Activated CD4-positive, alpha-beta T cell treated with anti-CD3 and anti-CD28 coated beads, Interleukin-2, amount 10 ng/mL, durations not matched to agents 24 days and 14 days (primary cell): ENCODE measurements at regions of chr1 and their contacts with region 1.

Region 1: GRCh38 chr1:66446261-66447001 is 87.5 kb upstream of the SGIP1 start:
- DNase-seq: peak; percentile 87
- H3K4me3 Mint-ChIP-seq: peak overlapping the region; percentile 77
- H3K27ac Mint-ChIP-seq: peak overlapping the region; percentile 93
- H3K4me1 Mint-ChIP-seq: peaks cover 30% of the 10 kb centered on the region
- H3K27me3 Mint-ChIP-seq: peaks cover 22% of the 10 kb centered on the region

Region 2: DNA sequence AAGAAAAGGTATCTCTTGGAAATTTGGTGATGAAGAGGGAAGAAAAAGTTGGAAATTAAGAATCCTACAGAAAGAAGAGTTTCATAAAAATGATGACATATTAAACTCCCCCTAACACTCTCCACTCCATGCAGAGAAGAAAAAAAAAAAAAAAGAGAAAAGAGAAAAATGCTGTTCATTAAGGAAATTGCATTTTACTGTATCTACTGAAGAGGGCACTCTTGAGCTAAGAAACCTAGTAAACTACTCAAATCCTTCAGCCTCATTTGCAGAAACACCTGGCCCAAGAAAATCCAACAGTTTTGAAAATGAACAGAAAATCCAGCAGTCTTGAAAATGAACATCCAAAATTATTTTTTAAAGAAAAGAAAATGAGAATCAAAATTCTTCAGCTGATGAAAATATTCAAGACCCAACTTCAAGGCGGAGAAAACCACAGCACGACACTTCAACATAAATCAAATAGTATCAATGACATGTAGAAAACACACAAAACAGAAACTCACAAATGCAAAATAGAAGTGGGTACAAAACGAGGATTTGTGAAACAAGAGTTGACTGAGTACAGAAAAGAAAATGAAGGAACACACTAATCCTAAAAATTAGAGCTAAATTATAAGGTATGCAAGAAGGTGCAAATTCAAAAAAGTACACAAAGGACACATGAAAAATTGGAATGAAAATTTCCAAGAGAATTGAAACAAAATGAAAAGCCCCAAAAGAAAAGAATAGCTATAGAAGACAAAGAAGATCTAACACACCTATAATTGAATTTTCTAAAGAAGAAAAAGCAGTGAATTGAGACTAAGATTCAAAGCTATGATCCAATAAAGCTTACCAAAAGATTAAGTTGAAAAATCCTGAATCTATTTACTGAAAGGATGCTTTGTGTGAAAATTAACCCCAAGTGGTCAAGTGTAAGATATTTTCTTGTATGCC is 1210.3 kb before region 1 on chr1:
- intact Hi-C with region 1: loop called (anchors 10 kb)
- DNase-seq: no peak
- H3K4me3 Mint-ChIP-seq: no peak overlapping the region
- H3K27ac Mint-ChIP-seq: no peak overlapping the region
- H3K4me1 Mint-ChIP-seq: peaks cover 13% of the 10 kb centered on the region
- H3K27me3 Mint-ChIP-seq: peaks cover 17% of the 10 kb centered on the region

Region 3: DNA sequence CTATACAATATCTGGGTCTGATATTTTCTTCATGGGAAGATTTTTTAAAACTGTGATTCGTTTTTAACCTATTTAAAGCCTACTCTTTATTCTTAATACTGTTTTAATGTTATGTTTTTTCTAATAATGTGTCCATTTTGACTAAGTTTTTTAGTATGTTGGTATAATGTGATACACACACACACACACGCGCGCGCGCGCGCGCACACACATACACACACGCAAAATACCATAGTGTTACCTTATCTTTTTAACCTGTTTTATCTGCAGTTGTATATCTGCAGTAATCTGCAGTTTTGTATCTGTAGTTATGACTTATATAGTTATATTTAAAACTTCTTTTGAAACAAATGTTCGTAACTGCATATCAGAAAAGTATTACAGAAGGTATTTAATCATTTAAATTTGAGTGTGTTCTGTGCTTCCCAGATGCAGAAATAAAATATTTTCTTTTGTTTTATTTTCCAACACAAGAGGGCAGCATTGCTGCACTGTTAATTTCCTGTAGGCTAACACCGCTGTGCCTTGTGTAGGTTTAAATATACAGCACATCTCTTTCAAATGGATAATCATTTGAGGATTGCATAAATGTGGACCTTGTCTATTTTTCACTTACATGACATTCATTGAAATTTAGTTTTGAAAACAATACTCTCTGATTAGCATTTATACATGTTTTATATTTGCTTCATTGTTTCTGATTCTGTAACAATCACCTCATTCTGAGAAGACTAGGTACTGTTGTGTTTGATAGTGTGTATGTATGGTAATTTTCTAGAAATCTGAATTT is 487.7 kb before region 1 on chr1:
- intact Hi-C with region 1: loop called (anchors 1 kb)
- DNase-seq: peak; percentile 82
- H3K4me3 Mint-ChIP-seq: no peak overlapping the region
- H3K27ac Mint-ChIP-seq: no peak overlapping the region
- H3K4me1 Mint-ChIP-seq: peaks cover 4% of the 10 kb centered on the region
- H3K27me3 Mint-ChIP-seq: peaks cover 3% of the 10 kb centered on the region

Region 4: GRCh38 chr1:66073388-66073787 is 373.0 kb before region 1 on chr1:
- intact Hi-C with region 1: no loop called
- DNase-seq: no peak
- H3K4me3 Mint-ChIP-seq: no peak overlapping the region
- H3K27ac Mint-ChIP-seq: no peak overlapping the region
- H3K4me1 Mint-ChIP-seq: no peaks in the 10 kb centered on the region
- H3K27me3 Mint-ChIP-seq: peaks cover 31% of the 10 kb centered on the region

Region 5: DNA sequence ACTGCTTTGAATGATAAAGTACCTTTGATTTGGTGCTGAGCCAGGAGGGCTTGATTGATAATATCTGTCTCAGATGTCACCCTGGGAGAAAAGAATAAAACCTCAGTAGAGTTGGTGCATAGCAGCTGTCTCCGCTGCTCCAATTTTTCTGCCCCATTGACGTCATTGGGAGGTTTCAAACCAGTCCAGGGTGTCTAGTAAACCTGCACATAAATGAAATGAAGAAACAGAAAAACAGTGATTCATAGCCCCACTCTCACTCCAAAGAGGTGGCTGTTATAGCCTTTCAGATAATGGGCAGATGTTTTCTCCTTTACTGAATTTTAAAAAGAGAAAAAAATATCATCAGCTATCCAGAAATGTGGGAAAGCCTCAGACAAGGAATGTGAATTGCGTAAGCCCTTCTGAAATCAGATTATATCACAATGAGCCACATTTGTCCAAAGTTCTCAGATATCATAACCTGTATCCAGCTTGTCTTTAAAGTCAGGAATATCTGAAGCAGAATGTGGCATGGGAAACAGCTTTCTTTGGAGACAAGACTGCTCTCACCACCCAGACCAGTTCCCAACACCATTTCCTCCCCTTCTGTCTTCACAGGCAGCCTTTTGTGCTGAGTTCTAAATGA is 263.8 kb before region 1 on chr1:
- intact Hi-C with region 1: loop called (anchors 5 kb)
- DNase-seq: peak; percentile 84
- H3K4me3 Mint-ChIP-seq: peak overlapping the region; percentile 52
- H3K27ac Mint-ChIP-seq: peak overlapping the region; percentile 52
- H3K4me1 Mint-ChIP-seq: peaks cover 29% of the 10 kb centered on the region
- H3K27me3 Mint-ChIP-seq: peaks cover 1% of the 10 kb centered on the region

Region 6: GRCh38 chr1:66253330-66253921 is 193.0 kb before region 1 on chr1:
- intact Hi-C with region 1: loop called (anchors 1 kb)
- DNase-seq: peak; percentile 82
- H3K4me3 Mint-ChIP-seq: no peak overlapping the region
- H3K27ac Mint-ChIP-seq: no peak overlapping the region
- H3K4me1 Mint-ChIP-seq: peaks cover 45% of the 10 kb centered on the region
- H3K27me3 Mint-ChIP-seq: no peaks in the 10 kb centered on the region

Region 7: DNA sequence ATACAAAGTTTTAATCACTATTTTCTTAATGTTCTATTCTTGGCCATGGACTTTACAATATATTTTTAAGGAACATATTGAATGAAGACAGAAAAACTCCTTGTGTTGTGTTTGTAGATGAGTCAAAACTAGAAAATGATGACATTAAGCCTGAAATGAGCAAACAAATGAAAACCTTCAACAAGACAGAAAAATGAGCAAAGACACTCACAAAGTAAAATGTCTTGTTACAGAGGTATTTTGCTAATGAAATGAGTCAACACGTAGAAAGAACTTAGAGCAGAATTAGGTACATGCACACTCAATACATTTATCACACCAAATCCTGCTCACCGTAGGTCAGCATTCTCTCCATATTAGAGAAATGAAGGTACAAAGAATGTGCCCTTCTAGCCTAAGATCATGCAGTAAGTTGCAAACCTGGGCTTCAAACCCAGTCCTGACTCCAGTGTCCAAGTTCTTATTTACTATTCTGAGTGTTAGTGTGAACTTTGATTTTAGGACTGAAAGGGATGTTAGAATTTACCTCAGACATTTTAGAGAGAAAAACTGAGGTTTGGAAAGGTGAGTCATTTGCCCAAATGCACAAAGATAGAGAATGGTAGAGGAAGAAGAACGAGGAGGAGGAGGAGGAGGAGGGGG is 46.4 kb before region 1 on chr1:
- intact Hi-C with region 1: loop called (anchors 1 kb)
- DNase-seq: no peak
- H3K4me3 Mint-ChIP-seq: peak overlapping the region; percentile 72
- H3K27ac Mint-ChIP-seq: peak overlapping the region; percentile 90
- H3K4me1 Mint-ChIP-seq: peaks cover 43% of the 10 kb centered on the region
- H3K27me3 Mint-ChIP-seq: no peaks in the 10 kb centered on the region